Activated CD8-positive, alpha-beta T cell treated with anti-CD3 and anti-CD28 coated beads for 36 hours (primary cell): ENCODE measurements at regions of chr1 and their contacts with region 1.

Region 1: GRCh38 chr1:54950369-54951163 is 29.9 kb upstream of the TMEM61 start:
- DNase-seq: peak; percentile 77
- ATAC-seq: peak; percentile 79
- H3K4me3 Mint-ChIP-seq: no peak overlapping the region
- H3K27ac Mint-ChIP-seq: no peak overlapping the region
- H3K4me1 Mint-ChIP-seq: peaks cover 2% of the 10 kb centered on the region
- H3K27me3 Mint-ChIP-seq: peaks cover 3% of the 10 kb centered on the region
- CTCF ChIP-seq: peak; percentile 75

Region 2: DNA sequence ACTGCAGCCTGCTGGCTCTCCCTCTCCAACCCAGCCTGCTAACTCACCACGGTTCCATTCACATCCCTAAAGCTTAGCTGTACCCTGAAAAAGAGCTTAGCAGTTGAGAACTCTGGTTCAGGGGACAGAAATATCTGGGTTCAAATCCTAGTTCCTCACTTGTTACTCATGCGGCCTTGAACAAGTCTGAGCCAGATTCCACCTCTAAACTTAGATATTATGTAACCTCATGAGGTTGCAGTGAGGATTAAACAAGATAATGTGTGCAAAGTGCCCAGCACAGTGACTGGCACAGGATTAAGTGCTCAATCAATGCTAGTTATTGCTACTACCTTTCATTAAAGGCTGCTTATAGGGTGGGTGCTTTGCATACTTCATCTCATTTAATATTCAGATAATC is 22.2 kb before region 1 on chr1:
- CTCF ChIA-PET with region 1: interaction called, 25 read pairs
- POLR2A ChIA-PET with region 1: no interaction called
- intact Hi-C with region 1: no loop called
- DNase-seq: no peak
- ATAC-seq: no peak
- H3K4me3 Mint-ChIP-seq: no peak overlapping the region
- H3K27ac Mint-ChIP-seq: no peak overlapping the region
- H3K4me1 Mint-ChIP-seq: no peaks in the 10 kb centered on the region
- H3K27me3 Mint-ChIP-seq: no peaks in the 10 kb centered on the region
- CTCF ChIP-seq: no peak

Region 3: DNA sequence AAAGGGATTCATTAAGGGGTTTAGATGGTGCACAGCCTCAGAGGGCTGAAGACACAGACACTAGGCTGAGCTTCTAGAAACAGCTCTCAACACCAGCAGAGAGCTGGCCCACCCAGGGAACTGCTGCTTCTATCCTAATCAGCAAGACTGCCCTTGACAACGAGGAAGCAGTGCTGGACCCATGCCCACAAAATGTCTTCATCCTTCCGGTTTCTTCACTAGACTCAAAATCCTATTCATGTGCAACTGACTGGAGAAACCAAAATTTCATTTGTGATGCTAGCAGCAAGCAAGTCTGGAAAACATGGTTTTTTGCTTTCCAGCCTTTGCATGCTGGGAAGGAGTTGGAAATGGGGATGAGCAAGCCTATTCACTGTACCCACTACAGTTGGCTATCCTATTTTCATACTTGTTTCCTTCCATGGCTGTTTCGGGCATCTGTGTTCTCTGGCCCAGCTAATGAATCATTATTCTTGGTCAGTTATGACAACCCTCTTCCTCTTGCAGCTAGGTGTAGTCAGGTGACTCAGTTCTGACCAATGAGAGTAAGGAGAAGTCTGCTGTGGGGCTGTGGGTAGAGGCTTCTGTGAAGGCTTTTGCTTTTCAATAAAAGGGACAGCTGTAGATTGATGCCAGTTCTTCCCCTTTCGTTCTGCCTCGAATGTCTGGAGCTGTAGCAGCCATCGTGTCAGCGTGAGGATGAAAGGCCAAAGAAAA is 15.2 kb after region 1 on chr1:
- CTCF ChIA-PET with region 1: interaction called, 24 read pairs
- POLR2A ChIA-PET with region 1: no interaction called
- intact Hi-C with region 1: no loop called
- DNase-seq: peak; percentile 10
- ATAC-seq: peak; percentile 58
- H3K4me3 Mint-ChIP-seq: no peak overlapping the region
- H3K27ac Mint-ChIP-seq: no peak overlapping the region
- H3K4me1 Mint-ChIP-seq: peaks cover 5% of the 10 kb centered on the region
- H3K27me3 Mint-ChIP-seq: peaks cover 13% of the 10 kb centered on the region
- CTCF ChIP-seq: no peak

Region 4: DNA sequence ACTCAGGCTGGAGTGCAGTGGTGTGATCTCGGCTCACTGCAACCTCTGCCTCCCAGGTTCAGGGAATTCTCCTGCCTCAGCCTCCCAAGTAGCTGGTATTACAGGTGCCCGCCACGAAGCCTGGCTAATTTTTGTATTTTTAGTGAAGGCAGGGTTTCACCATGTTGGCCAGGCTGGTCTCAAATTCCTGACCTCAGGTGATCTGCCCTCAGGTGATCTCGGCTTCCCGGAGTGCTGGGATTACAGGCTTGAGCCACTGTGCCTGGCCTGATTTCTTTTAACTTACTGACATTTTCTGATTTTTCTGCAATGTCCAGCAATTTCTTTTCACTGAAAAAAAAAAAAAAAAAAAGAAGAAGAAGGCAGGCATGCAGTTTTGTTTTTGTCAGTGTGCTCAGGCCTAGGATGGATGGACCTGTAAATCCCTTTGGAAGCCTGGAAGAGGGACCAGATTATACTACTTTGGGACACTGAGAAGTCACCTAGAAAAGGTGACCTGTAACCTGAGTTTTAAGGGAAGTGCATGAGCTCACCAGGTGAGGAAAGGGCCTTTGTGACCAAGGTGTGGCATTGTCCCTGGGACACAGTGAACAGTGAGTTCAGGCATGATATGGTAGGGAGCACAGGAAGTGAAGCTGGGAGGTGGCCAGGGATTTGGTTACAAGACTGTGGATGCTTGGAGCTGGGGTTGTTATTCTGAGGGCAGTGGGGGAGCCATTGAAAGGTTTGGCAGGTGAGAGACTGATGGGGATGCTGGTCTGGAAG is 27.1 kb after region 1 on chr1:
- CTCF ChIA-PET with region 1: interaction called, 12 read pairs
- POLR2A ChIA-PET with region 1: no interaction called
- intact Hi-C with region 1: no loop called
- DNase-seq: no peak
- ATAC-seq: no peak
- H3K4me3 Mint-ChIP-seq: no peak overlapping the region
- H3K27ac Mint-ChIP-seq: no peak overlapping the region
- H3K4me1 Mint-ChIP-seq: peaks cover 2% of the 10 kb centered on the region
- H3K27me3 Mint-ChIP-seq: peaks cover 32% of the 10 kb centered on the region
- CTCF ChIP-seq: no peak

Region 5: DNA sequence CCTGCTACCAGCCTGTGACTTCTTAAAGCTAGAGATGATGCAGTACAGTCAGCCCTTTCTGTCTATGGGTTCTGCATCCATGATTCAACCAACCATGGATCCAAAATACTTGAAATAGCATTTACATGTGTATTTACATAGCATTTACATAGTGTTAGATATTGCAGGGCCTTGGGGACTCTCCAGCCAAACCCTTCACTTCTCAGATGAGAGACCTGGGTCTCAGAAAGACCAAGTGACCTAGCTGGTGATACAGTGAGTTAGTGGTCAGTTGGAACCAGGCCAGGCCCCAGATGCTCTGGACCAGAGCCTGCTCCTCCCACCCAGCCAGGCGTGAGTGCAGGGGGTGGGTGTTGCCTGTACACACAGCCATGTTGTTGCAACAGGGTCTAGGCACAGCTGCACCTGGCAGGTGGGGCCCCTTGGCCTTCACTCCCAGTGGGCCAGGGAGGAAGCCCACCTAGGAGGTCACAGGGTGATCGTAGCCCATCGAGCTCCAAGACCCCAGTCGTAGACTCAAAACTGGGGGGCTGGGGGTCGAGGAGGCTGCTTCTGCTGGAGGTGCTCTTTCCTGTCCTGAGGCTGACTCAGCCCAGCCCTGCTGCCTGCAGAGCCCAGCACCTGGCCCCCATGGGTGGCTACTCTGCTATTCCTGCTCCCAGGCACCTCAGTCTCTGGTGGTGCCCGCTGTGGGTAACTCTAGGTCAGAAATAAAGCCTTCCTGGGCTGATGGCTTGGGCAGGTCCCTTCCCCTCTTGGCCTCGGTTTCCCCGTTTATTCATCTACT is 37.5 kb after region 1 on chr1:
- CTCF ChIA-PET with region 1: interaction called, 22 read pairs
- POLR2A ChIA-PET with region 1: no interaction called
- intact Hi-C with region 1: no loop called
- DNase-seq: no peak
- ATAC-seq: no peak
- H3K4me3 Mint-ChIP-seq: no peak overlapping the region
- H3K27ac Mint-ChIP-seq: no peak overlapping the region
- H3K4me1 Mint-ChIP-seq: no peaks in the 10 kb centered on the region
- H3K27me3 Mint-ChIP-seq: no peaks in the 10 kb centered on the region
- CTCF ChIP-seq: no peak

Region 6: DNA sequence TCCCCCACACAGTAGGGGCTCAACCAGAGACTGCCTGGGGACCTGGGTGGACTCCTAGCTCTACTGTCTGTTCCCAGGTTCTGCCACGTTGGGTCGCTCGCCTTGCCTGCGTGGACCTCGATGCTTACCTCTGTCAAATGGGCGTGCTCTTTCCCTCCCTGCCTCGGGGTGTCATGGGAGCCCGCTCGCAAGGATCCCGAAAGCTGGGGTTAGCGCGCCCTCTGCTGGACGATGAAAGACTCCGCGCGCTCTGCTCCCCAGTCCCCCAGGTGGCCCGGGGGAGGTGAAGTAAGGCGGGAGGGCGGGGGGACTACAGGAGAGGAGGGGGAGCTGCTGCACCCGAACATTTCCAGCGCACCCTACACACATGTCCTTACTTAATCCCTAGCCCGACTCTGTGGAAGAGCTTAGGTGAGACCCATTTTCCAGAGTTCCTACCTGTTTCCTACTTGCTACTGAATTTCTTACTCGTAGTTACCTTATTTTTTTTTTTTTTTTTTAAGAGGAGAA is 45.8 kb after region 1 on chr1:
- CTCF ChIA-PET with region 1: interaction called, 64 read pairs
- POLR2A ChIA-PET with region 1: no interaction called
- intact Hi-C with region 1: loop called (anchors 2 kb)
- DNase-seq: peak; percentile 85
- ATAC-seq: peak; percentile 91
- H3K4me3 Mint-ChIP-seq: no peak overlapping the region
- H3K27ac Mint-ChIP-seq: no peak overlapping the region
- H3K4me1 Mint-ChIP-seq: peaks cover 24% of the 10 kb centered on the region
- H3K27me3 Mint-ChIP-seq: peaks cover 42% of the 10 kb centered on the region
- CTCF ChIP-seq: peak; percentile 88

Region 7: DNA sequence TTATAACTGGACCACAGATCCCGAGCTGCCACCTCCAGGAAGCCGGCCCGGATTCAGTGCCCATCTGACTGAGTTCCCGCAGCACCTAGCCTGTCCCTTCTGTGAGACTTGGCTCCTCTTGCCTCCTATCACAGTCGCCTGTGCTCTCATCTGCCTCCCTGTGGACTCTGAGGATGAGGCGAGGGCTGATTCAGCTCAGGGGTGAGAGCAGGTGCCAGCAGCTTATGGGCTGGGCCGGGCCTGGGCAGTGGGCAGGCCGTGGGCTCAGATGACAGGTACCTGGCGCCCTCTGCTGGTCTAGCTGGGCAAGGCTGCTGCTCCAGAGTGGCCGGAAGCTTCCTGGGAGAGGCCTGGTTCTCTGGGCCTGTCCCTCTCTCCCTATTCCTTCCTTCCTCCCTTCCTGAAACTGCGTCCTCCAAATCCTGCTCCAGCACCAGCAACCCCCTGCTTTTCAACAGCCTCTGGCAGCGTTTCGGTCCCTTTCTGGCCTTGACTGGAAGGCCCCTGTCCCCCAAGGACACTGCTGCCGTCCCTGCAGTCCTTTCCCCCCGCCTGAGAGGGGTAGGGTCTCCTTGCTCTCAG is 71.5 kb after region 1 on chr1:
- CTCF ChIA-PET with region 1: interaction called, 63 read pairs
- POLR2A ChIA-PET with region 1: no interaction called
- intact Hi-C with region 1: loop called (anchors 5 kb)
- DNase-seq: peak; percentile 83
- ATAC-seq: peak; percentile 100
- H3K4me3 Mint-ChIP-seq: no peak overlapping the region
- H3K27ac Mint-ChIP-seq: no peak overlapping the region
- H3K4me1 Mint-ChIP-seq: no peaks in the 10 kb centered on the region
- H3K27me3 Mint-ChIP-seq: peaks cover 1% of the 10 kb centered on the region
- CTCF ChIP-seq: peak; percentile 86

Region 8: DNA sequence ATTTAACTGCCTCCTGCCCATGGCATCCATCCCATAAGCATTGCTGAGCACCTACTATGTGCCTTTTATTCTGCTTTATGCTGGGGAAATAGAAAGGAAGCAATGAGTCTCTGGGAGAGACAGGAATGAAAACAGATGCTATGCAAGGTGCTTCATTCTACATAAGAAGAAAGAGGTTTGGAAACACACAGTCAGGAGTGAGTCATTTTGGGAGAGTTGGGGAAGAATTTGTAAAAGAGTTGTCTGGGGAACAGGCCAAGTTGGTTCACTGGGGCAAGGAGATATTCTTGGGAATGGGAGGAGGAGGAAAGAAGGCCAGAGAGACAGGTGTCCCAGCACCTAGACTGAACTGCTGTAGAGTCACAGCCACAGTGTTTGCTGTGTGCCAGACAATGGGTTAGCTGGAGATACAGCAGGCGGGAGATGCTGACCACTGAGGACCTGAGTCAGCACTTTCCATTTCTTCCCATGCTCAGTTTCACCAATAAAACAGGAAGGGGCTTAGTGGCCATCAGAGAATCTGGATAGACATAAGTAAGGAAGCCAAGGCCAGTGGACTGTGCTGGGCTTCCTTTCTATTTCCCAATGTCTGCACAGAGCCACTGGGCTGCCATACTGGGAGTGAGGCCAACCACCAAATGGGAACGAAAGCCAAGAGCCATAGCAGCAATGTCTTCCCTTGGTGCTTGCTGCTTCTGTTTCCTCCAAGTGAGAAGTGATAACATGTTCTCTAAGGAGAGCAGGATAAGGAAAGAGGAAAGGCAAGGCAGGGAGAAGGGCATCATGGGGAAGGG is 452.3 kb after region 1 on chr1:
- CTCF ChIA-PET with region 1: no interaction called
- POLR2A ChIA-PET with region 1: no interaction called
- intact Hi-C with region 1: no loop called
- DNase-seq: no peak
- ATAC-seq: no peak
- H3K4me3 Mint-ChIP-seq: no peak overlapping the region
- H3K27ac Mint-ChIP-seq: no peak overlapping the region
- H3K4me1 Mint-ChIP-seq: no peaks in the 10 kb centered on the region
- H3K27me3 Mint-ChIP-seq: peaks cover 17% of the 10 kb centered on the region
- CTCF ChIP-seq: no peak